Body of pancreas (tissue), 4 donors: ENCODE measurements at regions of chr18 and their contacts with region 1.

Region 1: GRCh38 chr18:62425465-62426195 is 97.2 kb upstream of the ZCCHC2 start:
- DNase-seq: peak; percentile 81 to 93 (median 82)
- ATAC-seq: peak; percentile 90
- H3K4me3 ChIP-seq: no peak overlapping the region
- H3K27ac ChIP-seq: peak overlapping the region in 3 of 4 donors; percentile 64 to 74 (median 72)
- H3K4me1 ChIP-seq: peaks cover 12% of the 10 kb centered on the region
- H3K27me3 ChIP-seq: no peaks in the 10 kb centered on the region
- CTCF ChIP-seq: peak; percentile 68 to 95 (median 92)
- POLR2A ChIP-seq: peak in 1 of 3 donors; percentile 12

Region 2: DNA sequence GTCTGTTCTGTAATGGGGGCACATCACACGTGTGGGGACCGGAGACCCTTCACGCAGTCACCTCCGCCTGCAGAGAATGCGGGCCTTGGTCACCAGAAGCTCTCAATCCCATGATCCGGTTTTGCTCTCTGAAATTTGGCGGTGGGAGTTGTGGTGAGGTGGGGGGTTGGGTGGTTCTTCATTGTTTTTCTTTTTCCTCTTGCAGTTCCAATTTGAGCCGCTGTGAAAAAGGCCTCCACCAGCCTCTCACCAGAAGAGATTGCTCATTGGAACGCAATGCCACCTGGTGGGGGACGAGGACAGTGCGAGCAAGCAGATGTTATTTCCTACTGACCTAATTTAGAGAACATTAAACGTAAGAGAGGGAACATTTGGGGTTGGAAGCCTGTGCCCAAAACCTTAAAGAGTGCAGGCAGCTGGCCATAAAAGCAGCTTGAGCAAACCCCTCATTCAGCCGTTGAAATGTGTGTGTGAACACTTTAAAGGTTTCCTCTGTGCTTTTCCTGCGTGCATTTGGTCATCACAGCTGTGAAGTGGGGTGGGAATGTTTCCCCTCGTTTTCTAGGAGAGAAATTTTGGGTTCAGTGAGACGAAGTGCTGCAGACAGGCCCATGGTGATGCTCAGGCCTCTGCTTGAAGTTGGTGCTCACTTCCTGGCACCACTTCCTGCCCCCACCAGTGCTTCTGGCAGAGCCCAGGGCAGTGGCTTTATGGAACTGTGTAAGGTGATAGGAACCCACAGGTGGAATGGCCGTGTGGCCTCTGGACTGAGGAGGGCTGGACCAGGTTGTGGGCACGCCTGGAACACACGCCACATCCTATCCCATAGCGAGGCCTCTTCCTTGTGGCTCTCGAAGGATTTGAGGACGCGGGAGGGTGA is 158.9 kb after region 1 on chr18:
- intact Hi-C with region 1: loop called (anchors 5 kb)
- DNase-seq: peak; percentile 83 to 90 (median 88)
- ATAC-seq: peak; percentile 93
- H3K4me3 ChIP-seq: no peak overlapping the region
- H3K27ac ChIP-seq: no peak overlapping the region
- H3K4me1 ChIP-seq: peaks cover 7% of the 10 kb centered on the region
- H3K27me3 ChIP-seq: no peaks in the 10 kb centered on the region
- CTCF ChIP-seq: peak; percentile 91 to 100 (median 99)
- POLR2A ChIP-seq: no peak